Endothelial cell of umbilical vein (primary cell): ENCODE measurements at regions of chr1 and their contacts with region 1.

Region 1: GRCh38 chr1:46603858-46604549 is at the start of gene MKNK1:
- DNase-seq: peak; percentile 98
- H3K4me3 ChIP-seq: peak within 1 kb of the TSS; percentile 67 to 75 (median 69)
- H3K27ac ChIP-seq: peak within 1 kb of the TSS; percentile 19
- H3K4me1 ChIP-seq: peaks cover 13% of the 10 kb centered on the region
- H3K27me3 ChIP-seq: no peaks in the 10 kb centered on the region
- CTCF ChIP-seq: peak in 1 of 2 donors; percentile 19
- POLR2A ChIP-seq: peak; percentile 71
- total RNA-seq, gene MKNK1: 37.3 and 42.6 TPM in 2 replicates

Region 2: DNA sequence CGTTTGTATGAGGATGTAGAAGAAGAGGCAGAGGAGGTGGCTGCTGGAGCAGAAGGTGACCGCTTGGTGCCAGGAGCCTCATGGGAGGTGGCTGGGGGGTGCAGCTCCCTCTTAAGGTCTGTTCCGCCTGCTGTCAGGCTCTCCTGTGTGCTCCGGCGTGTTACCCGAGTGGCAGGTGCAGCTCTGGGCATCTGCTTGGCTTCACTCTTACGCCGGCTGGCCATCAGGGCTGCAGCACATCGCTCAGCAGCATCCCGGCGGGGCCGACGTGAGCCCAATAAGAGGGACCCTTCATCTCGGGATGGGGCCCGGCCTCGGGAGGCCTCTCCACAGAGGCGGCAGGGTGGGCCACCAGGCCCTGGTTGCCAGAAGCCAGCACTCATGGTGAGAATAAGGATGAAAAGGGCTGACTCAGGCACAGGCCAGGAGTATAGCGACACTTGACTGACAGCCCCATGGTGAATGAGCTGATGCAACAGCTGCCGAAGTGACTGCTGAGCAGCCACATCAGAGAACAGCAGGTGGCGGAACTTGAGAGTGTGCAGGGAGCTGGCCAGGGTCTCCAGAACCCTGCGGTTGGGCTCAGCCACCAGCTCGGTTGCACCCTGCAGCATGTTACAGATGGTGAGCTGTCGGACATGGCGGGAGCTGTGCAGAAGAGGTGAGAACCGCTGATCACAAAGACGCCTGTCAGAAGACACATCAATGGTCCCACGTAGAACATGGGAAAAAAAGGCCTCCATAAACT is 318.1 kb before region 1 on chr1:
- CTCF ChIA-PET with region 1: no interaction called
- POLR2A ChIA-PET with region 1: no interaction called
- dilution Hi-C with region 1: no loop called
- intact Hi-C with region 1: no loop called
- DNase-seq: no peak
- H3K4me3 ChIP-seq: no peak overlapping the region
- H3K27ac ChIP-seq: no peak overlapping the region
- H3K4me1 ChIP-seq: peaks cover 9% of the 10 kb centered on the region
- H3K27me3 ChIP-seq: no peaks in the 10 kb centered on the region
- CTCF ChIP-seq: no peak
- POLR2A ChIP-seq: no peak

Region 3: DNA sequence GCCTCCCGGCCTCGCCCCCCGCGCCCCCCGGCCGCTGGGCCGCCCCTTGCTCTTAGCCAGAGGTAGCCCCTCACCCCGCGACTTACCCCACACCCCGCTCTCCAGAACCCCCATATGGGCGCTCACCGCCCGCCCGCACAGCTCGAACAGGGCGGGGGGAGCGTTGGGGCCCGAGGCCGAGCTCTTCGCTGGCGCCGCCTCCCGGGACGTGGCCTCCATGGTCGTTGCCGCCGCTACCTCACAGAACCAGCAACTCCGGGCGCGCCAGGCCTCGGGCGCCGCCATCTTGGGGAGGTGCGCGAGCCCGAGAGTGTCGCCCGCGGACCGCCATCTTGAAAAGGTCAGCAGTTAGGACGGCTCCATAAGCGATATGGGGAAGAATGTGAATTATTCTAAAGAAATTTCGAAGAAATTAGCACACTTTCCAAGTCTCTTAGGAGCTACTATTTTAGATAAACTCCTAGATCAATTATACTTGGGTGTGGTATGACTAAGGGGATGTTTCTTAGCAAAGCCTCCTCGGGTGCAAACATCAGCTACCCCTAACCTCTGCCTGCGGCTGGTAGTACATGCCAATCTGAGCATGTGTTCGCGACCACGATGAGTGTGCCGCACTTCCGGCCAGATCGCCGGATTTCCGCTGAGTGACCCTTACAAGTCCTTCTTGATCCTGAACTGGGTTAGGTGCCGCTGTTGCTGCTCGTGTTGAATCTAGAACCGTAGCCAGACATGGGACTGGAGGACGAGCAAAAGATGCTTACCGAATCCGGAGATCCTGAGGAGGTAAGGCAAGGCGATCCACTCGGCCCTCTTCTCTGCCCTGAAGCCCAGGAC is 300.7 kb before region 1 on chr1 and contains the starts of genes LRRC41 and UQCRH:
- CTCF ChIA-PET with region 1: no interaction called
- POLR2A ChIA-PET with region 1: no interaction called
- dilution Hi-C with region 1: no loop called
- intact Hi-C with region 1: no loop called
- DNase-seq: peak; percentile 96
- H3K4me3 ChIP-seq: peak within 1 kb of the TSS; percentile 81 to 94 (median 84)
- H3K27ac ChIP-seq: peak within 1 kb of the TSS; percentile 81
- H3K4me1 ChIP-seq: peaks cover 20% of the 10 kb centered on the region
- H3K27me3 ChIP-seq: no peaks in the 10 kb centered on the region
- CTCF ChIP-seq: peak; percentile 4 to 11
- POLR2A ChIP-seq: peak; percentile 75
- total RNA-seq, gene LRRC41: 69.2 and 71.5 TPM in 2 replicates
- total RNA-seq, gene UQCRH: 253 and 266 TPM in 2 replicates

Region 4: GRCh38 chr1:46616277-46617107 is 12.5 kb after region 1 on chr1 and contains the start of gene MOB3C:
- CTCF ChIA-PET with region 1: interaction called, 13 read pairs
- POLR2A ChIA-PET with region 1: interaction called, 8 read pairs
- dilution Hi-C with region 1: no loop called
- intact Hi-C with region 1: loop called (anchors 1 kb)
- DNase-seq: peak; percentile 79
- H3K4me3 ChIP-seq: peak within 1 kb of the TSS; percentile 44 to 70 (median 62)
- H3K27ac ChIP-seq: no peak within 1 kb of the TSS
- H3K4me1 ChIP-seq: peaks cover 11% of the 10 kb centered on the region
- H3K27me3 ChIP-seq: no peaks in the 10 kb centered on the region
- CTCF ChIP-seq: no peak
- POLR2A ChIP-seq: peak; percentile 53
- total RNA-seq, gene MOB3C: 6.5 and 8.4 TPM in 2 replicates

Region 5: DNA sequence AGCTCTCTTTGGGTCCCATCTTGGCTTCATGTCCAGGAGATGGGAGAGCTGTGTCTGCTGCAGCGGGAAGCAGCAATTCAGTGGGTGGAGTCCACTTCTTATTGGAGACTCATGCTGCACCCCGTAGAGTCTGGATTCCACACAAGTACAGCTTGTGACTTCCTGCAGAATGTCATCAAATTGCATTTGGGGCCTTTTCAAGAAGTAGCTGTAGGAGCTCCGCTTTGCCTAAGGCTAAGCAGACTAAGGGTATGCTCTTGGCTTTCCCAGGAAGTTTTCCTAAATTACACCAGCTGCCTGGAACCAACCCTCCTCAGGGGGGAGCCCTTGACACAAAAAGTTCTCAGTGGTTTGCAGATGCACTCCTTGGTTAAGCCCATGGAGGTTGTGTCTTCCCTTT is 18.3 kb after region 1 on chr1:
- CTCF ChIA-PET with region 1: interaction called, 13 read pairs
- POLR2A ChIA-PET with region 1: no interaction called
- dilution Hi-C with region 1: no loop called
- intact Hi-C with region 1: no loop called
- DNase-seq: no peak
- H3K4me3 ChIP-seq: no peak overlapping the region
- H3K27ac ChIP-seq: no peak overlapping the region
- H3K4me1 ChIP-seq: peaks cover under 1% of the 10 kb centered on the region
- H3K27me3 ChIP-seq: no peaks in the 10 kb centered on the region
- CTCF ChIP-seq: peak; percentile 34 to 37
- POLR2A ChIP-seq: no peak

Region 6: GRCh38 chr1:46667782-46668760 is 64.1 kb after region 1 on chr1 and contains the start of gene ATPAF1:
- CTCF ChIA-PET with region 1: interaction called, 3 read pairs
- POLR2A ChIA-PET with region 1: no interaction called
- dilution Hi-C with region 1: no loop called
- intact Hi-C with region 1: loop called (anchors 1 kb)
- DNase-seq: peak; percentile 61
- H3K4me3 ChIP-seq: peak within 1 kb of the TSS; percentile 64 to 87 (median 76)
- H3K27ac ChIP-seq: no peak within 1 kb of the TSS
- H3K4me1 ChIP-seq: peaks cover 10% of the 10 kb centered on the region
- H3K27me3 ChIP-seq: no peaks in the 10 kb centered on the region
- CTCF ChIP-seq: no peak
- POLR2A ChIP-seq: peak; percentile 66
- total RNA-seq, gene ATPAF1: 28.4 and 29.6 TPM in 2 replicates

Region 7: DNA sequence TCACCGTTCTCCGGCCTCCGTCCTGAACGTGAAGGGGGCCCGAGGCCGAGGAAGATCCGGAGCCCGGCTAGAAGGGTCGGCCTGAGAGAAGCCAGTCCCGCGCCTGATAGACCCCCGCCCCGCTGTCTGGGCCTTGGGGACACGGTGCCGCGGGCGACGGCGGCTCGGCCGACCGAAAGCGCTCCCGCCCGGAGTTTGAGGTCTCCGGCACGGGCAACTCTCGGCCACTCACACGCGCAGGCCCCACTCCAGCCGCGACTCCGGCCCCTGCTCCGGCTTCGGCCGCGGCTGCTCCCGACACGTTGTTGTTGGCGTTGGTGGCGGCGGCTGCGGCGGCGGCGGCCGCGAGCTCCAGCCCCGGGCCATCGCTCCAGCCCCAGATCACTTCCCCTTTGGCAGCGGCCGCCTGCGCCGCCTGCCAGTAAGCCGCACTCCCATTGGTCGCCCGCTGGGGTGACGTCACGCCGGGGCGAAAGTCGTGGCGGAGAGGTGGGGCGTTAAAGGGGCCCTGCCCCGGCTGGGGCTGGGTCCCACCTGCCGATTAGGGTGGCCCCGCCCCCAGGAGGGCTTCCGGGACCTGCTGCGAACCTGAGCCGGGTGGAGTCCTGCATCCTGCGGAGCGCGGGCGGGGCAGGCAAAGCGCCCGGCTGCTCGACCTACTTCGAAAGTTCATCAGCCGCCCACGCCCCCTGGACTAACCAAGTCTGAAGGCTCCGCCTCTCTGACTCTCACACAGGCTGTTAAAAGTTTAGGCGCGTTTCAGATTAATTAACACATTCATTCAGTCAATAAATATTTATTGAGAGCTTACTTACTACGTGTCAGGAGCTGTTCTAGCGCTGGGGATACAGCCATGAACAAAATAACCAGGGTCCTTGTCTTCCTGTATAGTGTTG is 115.0 kb after region 1 on chr1 and contains the start of gene EFCAB14:
- CTCF ChIA-PET with region 1: interaction called, 4 read pairs
- POLR2A ChIA-PET with region 1: no interaction called
- dilution Hi-C with region 1: no loop called
- intact Hi-C with region 1: loop called (anchors 1 kb)
- DNase-seq: peak; percentile 94
- H3K4me3 ChIP-seq: peak within 1 kb of the TSS; percentile 63 to 96 (median 83)
- H3K27ac ChIP-seq: peak within 1 kb of the TSS; percentile 82
- H3K4me1 ChIP-seq: peaks cover 33% of the 10 kb centered on the region
- H3K27me3 ChIP-seq: peaks cover 0 to 6% of the 10 kb centered on the region in 2 experiments
- CTCF ChIP-seq: no peak
- POLR2A ChIP-seq: peak; percentile 48
- total RNA-seq, gene EFCAB14: 81.7 and 81.9 TPM in 2 replicates